Right cardiac atrium (tissue), 5 donors: ENCODE measurements at regions of chr22 and their contacts with region 1.

Region 1: DNA sequence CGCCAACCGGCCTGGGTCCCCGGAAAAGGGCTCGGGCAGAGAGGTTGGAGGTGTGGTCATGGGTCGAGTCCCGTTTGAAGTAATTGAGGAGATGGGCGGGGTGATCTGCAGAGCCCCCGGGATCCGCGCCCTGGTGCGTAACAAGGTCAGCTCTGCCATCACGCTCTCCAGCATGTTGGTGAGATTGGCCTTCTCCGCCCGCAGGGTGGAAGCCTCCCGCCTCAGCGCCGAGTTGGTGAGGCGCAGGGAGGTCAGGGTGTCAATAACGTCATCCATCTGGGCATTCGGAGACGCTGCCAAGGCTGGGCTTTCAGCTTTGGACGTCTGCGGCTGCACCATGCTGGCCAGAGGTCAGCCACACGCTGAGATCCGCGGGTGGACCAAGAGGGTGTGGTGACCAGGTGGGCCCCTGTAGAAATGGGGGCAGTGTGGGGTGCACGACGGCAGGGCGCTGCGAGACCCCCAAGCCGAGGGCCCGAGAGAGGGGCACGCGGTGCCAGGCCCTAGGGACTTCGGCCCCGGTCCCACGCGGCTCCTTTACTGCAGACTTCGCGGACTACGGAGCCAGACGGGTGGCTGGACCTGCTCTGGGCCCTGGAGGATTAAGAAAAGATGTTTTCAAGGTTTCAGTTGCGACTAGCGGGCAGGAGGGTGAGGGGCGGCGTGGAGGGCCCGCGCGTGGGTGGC is 672 bp downstream of the RTL6 start:
- DNase-seq: peak; percentile 65 to 74 (median 70)
- ATAC-seq: peak; percentile 4 to 50
- H3K4me3 ChIP-seq: peak overlapping the region; percentile 91
- H3K27ac ChIP-seq: peak overlapping the region; percentile 82
- H3K4me1 ChIP-seq: peaks cover 10% of the 10 kb centered on the region
- H3K27me3 ChIP-seq: no peaks in the 10 kb centered on the region

Region 2: GRCh38 chr22:44479662-44480061 is 17.7 kb before region 1 on chr22:
- intact Hi-C with region 1: loop called in 1 of 4 experiments (anchors 2 kb)
- DNase-seq: no peak
- ATAC-seq: no peak
- H3K4me3 ChIP-seq: no peak overlapping the region
- H3K27ac ChIP-seq: no peak overlapping the region
- H3K4me1 ChIP-seq: no peaks in the 10 kb centered on the region
- H3K27me3 ChIP-seq: no peaks in the 10 kb centered on the region